ENCODE measurements at regions of chr15 and their contacts with region 1.

Region 1: DNA sequence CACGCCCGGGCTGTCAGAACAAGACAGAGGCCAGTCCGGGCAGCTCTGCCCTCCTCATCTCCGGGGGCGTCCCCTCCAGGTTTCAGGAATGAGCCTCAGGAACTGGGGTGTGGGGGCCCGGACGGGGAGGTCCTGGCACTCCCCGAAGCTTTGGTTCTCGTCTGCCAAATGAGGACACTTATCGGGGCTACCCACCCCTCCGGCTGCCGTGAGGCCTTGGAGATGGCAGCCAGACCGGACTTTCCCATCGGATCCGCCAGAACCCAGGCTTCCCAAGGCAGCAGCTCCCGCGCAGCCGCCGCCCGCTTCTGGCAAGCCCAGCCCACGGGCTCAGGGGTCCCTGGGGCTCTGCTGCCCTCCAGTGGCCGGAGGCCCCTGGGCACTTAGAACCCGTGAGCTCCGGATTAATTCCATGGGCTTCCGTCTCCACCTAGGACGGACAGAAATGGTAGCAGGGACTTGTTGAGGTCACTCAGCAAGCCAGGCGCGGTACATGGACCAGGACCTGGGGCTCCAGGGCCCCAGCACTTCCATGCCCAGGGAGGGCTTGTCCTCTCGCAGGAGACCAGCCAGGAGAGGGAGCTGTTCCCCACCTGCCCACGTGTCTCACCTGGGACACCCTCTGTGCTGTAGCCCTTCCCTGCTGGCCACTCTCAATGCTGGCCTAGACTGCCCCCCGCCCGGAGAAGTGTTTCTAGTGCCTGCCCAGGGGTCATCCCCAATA is 89.4 kb downstream of the LINGO1 start:
- DNase-seq: peak; percentile 68 to 79
- H3K4me3 ChIP-seq: peak overlapping the region; percentile 54
- H3K27ac ChIP-seq: no peak overlapping the region
- H3K4me1 ChIP-seq: peaks cover 23% of the 10 kb centered on the region
- H3K27me3 ChIP-seq: no peaks in the 10 kb centered on the region
- CTCF ChIP-seq: peak; percentile 93

Region 2: DNA sequence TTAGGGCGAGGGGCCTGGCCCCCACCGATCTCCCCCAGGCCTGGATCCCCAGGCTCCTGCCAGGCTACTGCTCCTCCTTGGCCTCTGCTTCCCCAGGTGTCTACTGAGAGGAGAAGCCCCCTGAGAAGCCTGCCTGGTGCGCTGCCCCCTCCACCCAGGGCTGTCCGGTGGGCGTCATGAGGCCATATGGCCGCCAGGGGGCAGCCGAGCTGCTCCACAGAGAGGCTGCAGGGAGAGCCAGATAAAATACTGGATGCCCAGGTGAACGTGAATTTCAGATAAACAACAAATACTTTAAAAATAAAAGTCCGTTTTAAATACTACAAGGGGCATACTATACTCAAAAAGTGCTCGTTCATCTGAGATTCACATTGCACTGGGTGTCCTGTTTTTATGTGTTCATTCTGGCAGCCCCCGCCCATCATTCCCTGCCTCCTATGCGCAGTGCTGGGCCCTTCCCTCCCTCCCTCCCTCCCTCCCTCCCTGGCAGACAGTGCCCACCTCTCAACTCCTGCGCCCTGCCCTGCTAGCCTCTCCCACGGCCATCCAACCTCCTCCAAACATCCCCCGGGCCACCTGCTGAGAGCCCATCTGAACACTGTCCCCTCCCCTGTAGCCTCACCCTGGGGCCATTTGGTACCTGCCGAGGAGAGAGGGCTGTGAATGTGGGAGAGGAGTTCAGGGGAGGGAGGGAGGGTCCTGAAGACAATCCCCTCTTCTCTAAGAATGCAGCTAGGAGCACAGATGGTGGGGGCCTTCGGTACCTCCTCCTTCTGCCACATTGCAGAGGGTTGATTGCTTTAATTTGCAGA is 518.8 kb before region 1 on chr15:
- CTCF ChIA-PET with region 1: no interaction called
- POLR2A ChIA-PET with region 1: no interaction called
- intact Hi-C with region 1: loop called (anchors 5 kb)
- DNase-seq: peak in 1 of 2 experiments; percentile 69
- H3K4me3 ChIP-seq: no peak overlapping the region
- H3K27ac ChIP-seq: no peak overlapping the region
- H3K4me1 ChIP-seq: no peaks in the 10 kb centered on the region
- H3K27me3 ChIP-seq: no peaks in the 10 kb centered on the region
- CTCF ChIP-seq: peak; percentile 98

Region 3: DNA sequence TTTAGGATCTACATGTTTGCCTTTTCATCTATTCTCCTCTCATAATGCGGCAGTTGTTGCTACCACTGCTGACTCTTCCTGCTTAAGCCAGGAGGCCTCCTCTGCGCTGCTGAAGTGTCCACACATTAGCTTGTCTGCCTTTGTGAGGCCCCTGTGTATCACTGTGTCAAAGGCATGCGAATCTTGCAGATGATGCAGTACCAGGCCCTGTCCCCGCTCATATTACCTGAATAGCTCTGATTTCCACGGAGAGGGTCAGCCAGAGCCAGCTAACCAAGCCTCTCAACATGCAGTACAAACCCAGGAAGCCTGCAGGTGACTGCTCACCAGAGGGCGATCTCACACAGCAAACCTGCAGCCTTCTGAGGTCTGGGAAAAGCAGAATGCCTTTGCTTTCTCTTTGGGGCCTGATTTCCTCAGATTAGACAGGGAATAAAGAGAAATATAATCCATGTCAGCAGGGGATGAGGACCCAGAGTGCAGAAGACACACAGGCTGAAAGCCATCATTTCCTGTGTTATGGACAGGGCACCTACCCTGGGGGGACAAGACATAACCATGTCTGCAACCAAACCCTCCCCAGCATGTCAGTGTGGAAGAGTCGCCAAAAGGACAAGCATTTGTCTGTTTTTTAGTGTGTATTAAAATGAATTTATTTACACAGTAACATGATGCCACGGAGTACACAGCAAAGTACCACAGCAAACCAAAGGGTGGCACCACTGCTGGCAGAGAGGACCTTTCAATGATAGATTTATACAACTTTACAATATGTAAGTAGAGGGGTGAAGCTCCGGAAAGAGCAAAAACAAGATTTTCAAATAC is 435.6 kb before region 1 on chr15:
- CTCF ChIA-PET with region 1: interaction called, 4 read pairs
- POLR2A ChIA-PET with region 1: interaction called, 7 read pairs
- intact Hi-C with region 1: loop called (anchors 1 kb)
- DNase-seq: peak in 1 of 2 experiments; percentile 60
- H3K4me3 ChIP-seq: no peak overlapping the region
- H3K27ac ChIP-seq: no peak overlapping the region
- H3K4me1 ChIP-seq: no peaks in the 10 kb centered on the region
- H3K27me3 ChIP-seq: no peaks in the 10 kb centered on the region
- CTCF ChIP-seq: peak; percentile 73

Region 4: DNA sequence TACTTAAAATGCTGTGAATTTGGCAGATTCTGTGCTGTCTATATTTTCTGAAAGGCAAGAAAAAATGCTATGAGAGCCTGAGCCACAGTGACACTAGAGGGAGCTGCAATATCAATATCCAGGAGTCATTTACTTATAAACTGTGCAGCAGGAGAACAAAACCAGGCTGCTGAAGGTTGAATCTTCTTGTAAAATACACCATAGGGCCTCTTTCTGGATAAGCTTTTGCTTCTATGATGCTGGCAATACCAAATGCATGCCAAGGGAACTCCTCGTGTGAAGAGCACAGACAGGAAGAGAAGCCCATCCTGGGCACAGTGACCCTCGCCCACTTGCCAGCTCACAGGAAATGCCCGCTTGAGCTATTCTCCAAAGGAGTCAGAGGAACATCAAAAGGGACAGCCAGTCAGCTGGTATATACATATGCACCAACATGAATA is 424.4 kb before region 1 on chr15:
- CTCF ChIA-PET with region 1: interaction called, 10 read pairs
- POLR2A ChIA-PET with region 1: no interaction called
- intact Hi-C with region 1: loop called (anchors 1 kb)
- DNase-seq: peak in 1 of 2 experiments; percentile 33
- H3K4me3 ChIP-seq: no peak overlapping the region
- H3K27ac ChIP-seq: no peak overlapping the region
- H3K4me1 ChIP-seq: no peaks in the 10 kb centered on the region
- H3K27me3 ChIP-seq: no peaks in the 10 kb centered on the region
- CTCF ChIP-seq: peak; percentile 87

Region 5: DNA sequence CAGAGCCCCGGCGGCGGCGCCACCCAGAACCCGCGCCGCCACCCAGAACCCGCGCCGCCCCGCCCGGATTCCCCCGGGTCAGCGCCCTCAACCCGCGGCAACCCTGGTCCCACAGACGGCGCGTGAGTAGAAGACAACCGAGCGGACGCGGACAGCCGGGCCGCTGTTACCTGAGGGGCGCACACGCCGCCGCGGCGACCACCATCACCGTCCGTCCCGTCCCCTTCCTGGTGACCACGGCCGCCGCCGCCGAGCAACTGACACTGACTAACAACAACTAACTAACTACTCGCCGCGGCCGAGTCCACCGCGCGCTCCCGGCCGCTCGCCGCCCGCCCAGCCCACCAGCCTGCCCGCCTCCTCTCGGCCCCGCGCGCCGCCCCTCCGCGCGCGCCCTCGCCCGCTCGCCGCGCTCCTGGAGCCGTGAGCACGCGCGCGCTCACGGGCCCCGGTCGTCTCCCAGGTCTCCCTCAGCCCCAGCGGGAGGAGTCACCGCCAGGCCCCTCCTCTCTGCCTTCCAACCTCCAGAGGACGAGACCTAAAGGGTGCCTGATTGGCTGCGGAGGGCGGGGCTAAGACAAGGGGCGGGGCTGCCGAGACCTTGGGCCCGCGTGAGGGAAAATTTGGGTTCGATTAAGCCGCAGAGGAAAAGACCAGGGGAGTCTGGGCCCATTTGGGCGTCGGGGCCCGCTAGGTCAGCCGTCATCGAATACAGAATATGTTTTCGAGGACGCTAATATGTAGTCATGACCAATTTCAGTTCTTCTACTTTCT is 123.3 kb before region 1 on chr15 and contains the start of gene PEAK1:
- CTCF ChIA-PET with region 1: no interaction called
- POLR2A ChIA-PET with region 1: no interaction called
- intact Hi-C with region 1: loop called (anchors 5 kb)
- DNase-seq: peak; percentile 94 to 98
- H3K4me3 ChIP-seq: peak within 1 kb of the TSS; percentile 92
- H3K27ac ChIP-seq: peak within 1 kb of the TSS; percentile 65
- H3K4me1 ChIP-seq: peaks cover 39% of the 10 kb centered on the region
- H3K27me3 ChIP-seq: no peaks in the 10 kb centered on the region
- CTCF ChIP-seq: no peak
- total RNA-seq, gene PEAK1: 20.6 and 20.7 TPM in 2 replicates

Region 6: GRCh38 chr15:77496710-77497103 is 46.6 kb before region 1 on chr15:
- CTCF ChIA-PET with region 1: interaction called, 18 read pairs
- POLR2A ChIA-PET with region 1: interaction called, 11 read pairs
- intact Hi-C with region 1: loop called (anchors 1 kb)
- DNase-seq: peak; percentile 48 to 71
- H3K4me3 ChIP-seq: no peak overlapping the region
- H3K27ac ChIP-seq: no peak overlapping the region
- H3K4me1 ChIP-seq: peaks cover 26% of the 10 kb centered on the region; the same call in 1 of the 2 replicates
- H3K27me3 ChIP-seq: no peaks in the 10 kb centered on the region
- CTCF ChIP-seq: peak; percentile 83

Region 7: GRCh38 chr15:77584201-77584600 is 40.9 kb after region 1 on chr15:
- CTCF ChIA-PET with region 1: no interaction called
- POLR2A ChIA-PET with region 1: no interaction called
- intact Hi-C with region 1: no loop called
- DNase-seq: no peak
- H3K4me3 ChIP-seq: no peak overlapping the region
- H3K27ac ChIP-seq: no peak overlapping the region
- H3K4me1 ChIP-seq: no peaks in the 10 kb centered on the region
- H3K27me3 ChIP-seq: peaks cover 54% of the 10 kb centered on the region
- CTCF ChIP-seq: no peak; the same call in 1 of the 2 replicates

Region 8: DNA sequence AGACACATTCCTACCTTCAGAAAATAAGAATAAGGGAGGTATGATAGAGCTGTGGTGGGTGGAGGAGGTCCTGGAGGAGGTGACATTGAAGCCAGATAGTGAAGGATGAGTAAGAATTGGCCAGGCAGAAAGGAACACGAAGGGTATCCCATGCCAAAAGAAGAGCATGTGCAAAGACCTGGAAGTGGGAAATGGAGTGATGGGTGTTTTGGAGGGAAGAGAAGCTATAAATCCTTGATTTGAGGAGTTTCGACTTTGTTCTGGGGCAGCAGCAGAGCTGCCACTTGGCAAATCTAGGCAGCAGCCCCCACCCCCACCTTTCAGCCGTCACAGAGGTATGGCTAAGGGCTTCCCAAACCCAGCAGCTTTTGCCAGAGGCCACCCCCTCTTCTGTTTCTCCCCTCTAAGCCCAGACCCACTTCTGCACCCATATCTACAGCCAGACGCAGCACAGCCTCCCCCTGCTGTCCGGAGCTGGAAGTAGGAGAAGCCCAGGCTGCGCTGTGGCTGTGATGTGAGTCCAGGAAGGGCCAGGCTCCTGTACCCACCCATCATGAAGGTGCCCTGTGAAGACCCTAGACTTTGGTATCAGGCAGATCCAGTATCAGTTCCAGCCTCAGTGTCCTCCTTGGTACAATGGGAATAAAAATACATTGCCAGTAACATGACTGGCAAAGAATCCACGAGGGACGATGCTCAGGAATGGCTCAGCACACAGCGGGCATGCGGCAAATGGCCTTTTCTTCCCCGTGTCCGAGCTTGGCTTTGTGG is 278.1 kb after region 1 on chr15:
- CTCF ChIA-PET with region 1: no interaction called
- POLR2A ChIA-PET with region 1: no interaction called
- intact Hi-C with region 1: loop called (anchors 1 kb)
- DNase-seq: peak in 1 of 2 experiments; percentile 52
- H3K4me3 ChIP-seq: no peak overlapping the region
- H3K27ac ChIP-seq: no peak overlapping the region
- H3K4me1 ChIP-seq: no peaks in the 10 kb centered on the region
- H3K27me3 ChIP-seq: peaks cover 43% of the 10 kb centered on the region
- CTCF ChIP-seq: peak; percentile 79